ACHN (cell line): ENCODE measurements at regions of chr10 and their contacts with region 1.

Region 1: DNA sequence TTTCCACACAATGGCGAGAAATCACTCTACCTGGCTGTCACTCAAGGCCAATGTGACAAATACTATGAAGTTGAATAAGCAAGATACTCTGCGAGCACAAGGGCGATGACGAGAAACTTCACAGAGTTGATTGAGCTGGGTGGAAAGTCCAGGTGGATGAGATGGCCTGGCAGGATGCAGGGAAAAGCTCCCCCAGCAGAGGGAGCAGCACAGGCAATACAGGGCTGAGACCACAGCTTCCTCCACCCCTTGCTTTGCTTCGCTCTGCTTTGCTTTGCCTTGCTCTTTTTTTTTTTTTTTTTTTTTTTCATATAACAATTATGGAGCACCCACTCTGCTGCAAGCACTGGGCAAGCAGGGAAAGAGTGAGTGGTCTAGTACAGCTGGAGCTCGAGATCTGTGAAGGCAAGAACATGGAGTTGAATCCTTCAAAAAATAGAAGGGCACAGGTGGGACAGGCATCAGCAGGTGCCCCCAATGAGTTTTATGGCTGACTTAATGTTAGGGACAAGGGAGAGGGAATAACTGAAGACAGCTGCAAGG is 88.3 kb downstream of the CABCOCO1 start:
- DNase-seq: peak; percentile 88

Region 2: DNA sequence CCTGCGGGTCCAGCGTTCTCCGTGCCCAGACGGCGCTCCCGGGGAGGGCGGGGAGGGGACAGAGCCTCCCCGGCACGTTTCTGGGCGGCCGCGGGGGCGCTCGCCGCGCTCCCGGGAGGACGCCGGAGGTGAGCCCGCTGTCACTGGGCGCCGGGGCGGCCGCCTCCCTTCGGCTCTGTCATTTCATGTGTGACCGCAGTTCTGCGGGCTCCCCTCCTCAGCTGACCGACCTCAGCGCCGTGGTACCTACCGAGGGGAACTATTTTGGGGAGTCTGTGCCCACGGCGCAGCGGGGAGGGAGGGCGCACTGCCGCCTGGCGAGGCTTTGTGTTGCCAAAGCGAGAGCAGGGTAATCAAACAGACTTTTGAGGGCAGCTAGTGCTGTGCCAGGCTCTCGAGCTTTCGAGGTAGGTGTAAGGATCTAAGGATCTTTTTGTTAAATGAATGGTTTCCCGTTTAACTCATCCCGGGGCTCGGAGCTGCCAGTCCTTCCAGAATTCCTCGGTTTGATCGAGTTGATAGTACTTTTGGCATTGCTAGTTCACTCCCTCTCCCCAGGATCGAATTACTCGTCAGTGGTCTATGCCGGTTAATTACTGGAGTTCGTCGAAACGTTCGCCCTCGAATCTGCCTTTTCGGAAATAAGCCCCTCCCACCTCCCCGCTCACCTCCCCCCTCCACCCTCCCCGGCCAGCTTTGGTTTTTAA is 152.4 kb after region 1 on chr10:
- in situ Hi-C with region 1: loop called (anchors 25 kb)
- DNase-seq: peak; percentile 72

Region 3: GRCh38 chr10:62153191-62153590 is 402.2 kb after region 1 on chr10:
- in situ Hi-C with region 1: no loop called
- DNase-seq: no peak